ENCODE measurements at regions of chr17 and their contacts with region 1.

Region 1: DNA sequence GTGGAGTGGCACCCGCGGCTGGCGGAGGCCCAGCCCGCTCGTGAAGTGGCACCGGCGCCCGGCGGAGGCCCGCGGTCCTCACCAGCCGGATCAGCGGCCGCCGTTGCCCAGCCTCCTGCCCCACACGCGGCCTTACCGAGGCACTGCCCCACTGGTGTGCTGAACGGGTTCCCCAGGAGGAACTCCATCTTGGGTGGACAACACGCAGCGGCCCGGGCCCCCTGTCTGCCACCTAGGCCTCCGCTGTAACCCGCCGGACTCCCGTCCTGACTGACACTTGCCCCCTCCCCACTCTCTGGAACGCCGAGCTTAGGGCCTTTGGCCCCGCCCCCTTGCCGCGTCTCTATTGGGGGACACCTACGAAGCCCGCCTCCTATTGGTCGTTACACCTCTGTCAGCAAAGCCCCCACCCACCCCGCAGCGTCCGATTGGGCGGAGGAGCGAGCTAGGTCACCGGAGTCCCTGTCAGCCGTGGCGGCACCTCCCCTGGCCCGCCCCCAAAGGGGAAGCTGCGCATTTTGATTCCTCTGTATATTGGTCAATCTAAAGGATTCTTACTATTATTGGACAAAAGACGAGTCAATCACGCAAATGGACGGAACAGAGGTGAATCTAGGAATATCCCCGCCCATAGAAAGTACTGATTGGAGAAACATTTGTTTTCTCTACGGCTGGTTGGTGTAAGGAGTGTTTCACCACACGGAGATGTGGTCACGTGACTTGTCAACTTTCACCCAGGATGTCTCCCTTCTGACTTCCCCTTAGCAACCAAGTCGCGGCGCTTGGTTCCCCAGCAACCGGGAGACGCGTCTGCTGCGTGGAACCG is at the starts of genes DRC3 and TOM1L2:
- DNase-seq: peak; percentile 100
- H3K4me3 ChIP-seq: peak within 1 kb of the TSS; percentile 64
- H3K4me3 Mint-ChIP-seq: peak within 1 kb of the TSS; percentile 84
- H3K27ac Mint-ChIP-seq: peak within 1 kb of the TSS; percentile 93
- H3K4me1 ChIP-seq: peaks cover 13% of the 10 kb centered on the region
- H3K4me1 Mint-ChIP-seq: peaks cover 20% of the 10 kb centered on the region
- H3K27me3 ChIP-seq: no peaks in the 10 kb centered on the region
- H3K27me3 Mint-ChIP-seq: no peaks in the 10 kb centered on the region
- CTCF ChIP-seq: peak in 1 of 2 experiments; percentile 14
- total RNA-seq, gene DRC3: 1.6 and 2.1 TPM in 2 replicates
- total RNA-seq, gene TOM1L2: 35.5 and 43.3 TPM in 2 replicates

Region 2: GRCh38 chr17:17935321-17936271 is 36.7 kb before region 1 on chr17:
- CTCF ChIA-PET with region 1: interaction called, 11 read pairs
- POLR2A ChIA-PET with region 1: interaction called, 8 read pairs
- intact Hi-C with region 1: loop called (anchors 5 kb)
- DNase-seq: peak; percentile 77 to 88
- H3K4me3 ChIP-seq: no peak overlapping the region
- H3K4me3 Mint-ChIP-seq: peak overlapping the region; percentile 18
- H3K27ac Mint-ChIP-seq: peak overlapping the region; percentile 21
- H3K4me1 ChIP-seq: peaks cover 63% of the 10 kb centered on the region
- H3K4me1 Mint-ChIP-seq: peaks cover 46% of the 10 kb centered on the region
- H3K27me3 ChIP-seq: no peaks in the 10 kb centered on the region
- H3K27me3 Mint-ChIP-seq: no peaks in the 10 kb centered on the region
- CTCF ChIP-seq: no peak

Region 3: DNA sequence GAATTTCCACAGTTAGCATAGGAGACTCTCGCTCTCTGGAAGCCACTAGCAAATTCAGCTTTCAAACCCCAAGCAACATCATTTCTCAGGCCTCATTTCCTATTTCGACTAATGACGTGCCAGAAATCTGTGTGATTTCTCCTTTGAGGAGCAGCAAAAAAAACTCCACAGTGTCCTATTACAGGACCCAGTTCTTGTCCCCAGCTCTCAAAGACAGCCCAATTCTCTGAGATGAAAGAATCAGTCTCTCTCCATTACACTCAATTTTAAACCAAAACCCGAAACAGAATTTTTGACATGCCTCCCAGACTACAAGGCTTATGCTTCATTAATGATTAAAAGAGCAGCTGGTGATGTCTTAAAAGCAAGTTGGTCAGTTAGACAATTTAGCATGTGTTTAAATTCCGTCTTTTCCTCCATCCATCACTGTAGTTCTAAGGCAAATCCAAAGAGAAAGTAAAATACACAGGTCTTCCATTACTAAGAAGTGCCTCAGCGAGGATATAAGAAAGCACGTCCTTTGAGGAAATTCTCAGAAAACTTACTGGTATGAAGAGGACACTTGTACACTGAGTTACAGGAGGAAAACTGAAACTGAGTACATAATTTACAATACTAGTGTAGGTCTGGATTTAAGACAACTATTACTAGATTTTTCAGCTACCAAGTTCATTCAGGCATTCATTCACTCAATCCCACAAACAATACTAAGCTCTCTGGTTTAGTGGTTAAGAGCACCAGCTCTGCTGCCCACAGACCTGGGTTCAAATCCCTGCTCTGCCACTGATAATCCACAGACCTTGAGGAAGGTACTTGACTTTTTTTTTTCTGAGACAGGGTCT is 12.6 kb before region 1 on chr17:
- CTCF ChIA-PET with region 1: interaction called, 8 read pairs
- POLR2A ChIA-PET with region 1: interaction called, 5 read pairs
- intact Hi-C with region 1: loop called (anchors 1 kb)
- DNase-seq: no peak
- H3K4me3 ChIP-seq: no peak overlapping the region
- H3K4me3 Mint-ChIP-seq: peak overlapping the region; percentile 65
- H3K27ac Mint-ChIP-seq: peak overlapping the region; percentile 80
- H3K4me1 ChIP-seq: peaks cover 50% of the 10 kb centered on the region
- H3K4me1 Mint-ChIP-seq: peaks cover 44% of the 10 kb centered on the region
- H3K27me3 ChIP-seq: no peaks in the 10 kb centered on the region
- H3K27me3 Mint-ChIP-seq: no peaks in the 10 kb centered on the region
- CTCF ChIP-seq: no peak

Region 4: GRCh38 chr17:18038861-18039534 is 66.7 kb after region 1 on chr17 and contains the starts of genes ATPAF2 and GID4:
- CTCF ChIA-PET with region 1: interaction called, 9 read pairs
- POLR2A ChIA-PET with region 1: no interaction called
- intact Hi-C with region 1: loop called (anchors 5 kb)
- DNase-seq: peak; percentile 99 to 100
- H3K4me3 ChIP-seq: peak within 1 kb of the TSS; percentile 85
- H3K4me3 Mint-ChIP-seq: peak within 1 kb of the TSS; percentile 83
- H3K27ac Mint-ChIP-seq: peak within 1 kb of the TSS; percentile 82
- H3K4me1 ChIP-seq: peaks cover 19% of the 10 kb centered on the region
- H3K4me1 Mint-ChIP-seq: peaks cover 26% of the 10 kb centered on the region
- H3K27me3 ChIP-seq: no peaks in the 10 kb centered on the region
- H3K27me3 Mint-ChIP-seq: no peaks in the 10 kb centered on the region
- CTCF ChIP-seq: peak in 1 of 2 experiments; percentile 29
- total RNA-seq, gene ATPAF2: 37.9 and 40.3 TPM in 2 replicates
- total RNA-seq, gene GID4: 12.7 and 14.0 TPM in 2 replicates

Region 5: DNA sequence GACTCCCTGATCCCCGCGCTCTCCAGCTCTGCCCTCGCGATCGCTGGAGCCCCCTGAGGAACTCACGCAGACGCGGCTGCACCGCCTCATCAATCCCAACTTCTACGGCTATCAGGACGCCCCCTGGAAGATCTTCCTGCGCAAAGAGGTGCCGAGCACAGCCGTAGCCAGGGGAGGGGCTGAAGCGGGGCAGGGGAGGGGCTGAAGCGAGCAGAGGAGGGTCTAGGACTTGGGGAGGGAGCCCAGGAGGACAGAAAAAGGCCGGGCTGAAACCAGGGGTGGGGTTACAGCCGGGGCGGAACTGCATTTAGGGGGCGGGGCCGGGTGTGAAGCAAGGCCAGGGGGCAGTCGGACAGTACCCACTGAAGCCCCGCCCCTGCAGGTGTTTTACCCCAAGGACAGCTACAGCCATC is 181.4 kb after region 1 on chr17:
- CTCF ChIA-PET with region 1: no interaction called
- POLR2A ChIA-PET with region 1: no interaction called
- intact Hi-C with region 1: no loop called
- DNase-seq: peak; percentile 94 to 95
- H3K4me3 ChIP-seq: peak overlapping the region; percentile 43
- H3K4me3 Mint-ChIP-seq: peak overlapping the region; percentile 74
- H3K27ac Mint-ChIP-seq: no peak overlapping the region
- H3K4me1 ChIP-seq: peaks cover 3% of the 10 kb centered on the region; the same call in 1 of the 2 replicates
- H3K4me1 Mint-ChIP-seq: no peaks in the 10 kb centered on the region
- H3K27me3 ChIP-seq: no peaks in the 10 kb centered on the region
- H3K27me3 Mint-ChIP-seq: no peaks in the 10 kb centered on the region
- CTCF ChIP-seq: peak in 1 of 2 experiments; percentile 22